Uterus (tissue), 4 donors: ENCODE measurements at regions of chr12 and their contacts with region 1.

Region 1: GRCh38 chr12:14257734-14258574 is 107.5 kb upstream of the ATF7IP start:
- DNase-seq: peak; percentile 94 to 96
- H3K4me3 ChIP-seq: no peak overlapping the region
- H3K27ac ChIP-seq: peak overlapping the region; percentile 85 to 92
- H3K4me1 ChIP-seq: peaks cover 0 to 8% of the 10 kb centered on the region in 2 donors
- H3K27me3 ChIP-seq: no peaks in the 10 kb centered on the region
- CTCF ChIP-seq: peak in 2 of 4 experiments; percentile 7 to 46
- POLR2A ChIP-seq: peak in 1 of 2 donors; percentile 57

Region 2: DNA sequence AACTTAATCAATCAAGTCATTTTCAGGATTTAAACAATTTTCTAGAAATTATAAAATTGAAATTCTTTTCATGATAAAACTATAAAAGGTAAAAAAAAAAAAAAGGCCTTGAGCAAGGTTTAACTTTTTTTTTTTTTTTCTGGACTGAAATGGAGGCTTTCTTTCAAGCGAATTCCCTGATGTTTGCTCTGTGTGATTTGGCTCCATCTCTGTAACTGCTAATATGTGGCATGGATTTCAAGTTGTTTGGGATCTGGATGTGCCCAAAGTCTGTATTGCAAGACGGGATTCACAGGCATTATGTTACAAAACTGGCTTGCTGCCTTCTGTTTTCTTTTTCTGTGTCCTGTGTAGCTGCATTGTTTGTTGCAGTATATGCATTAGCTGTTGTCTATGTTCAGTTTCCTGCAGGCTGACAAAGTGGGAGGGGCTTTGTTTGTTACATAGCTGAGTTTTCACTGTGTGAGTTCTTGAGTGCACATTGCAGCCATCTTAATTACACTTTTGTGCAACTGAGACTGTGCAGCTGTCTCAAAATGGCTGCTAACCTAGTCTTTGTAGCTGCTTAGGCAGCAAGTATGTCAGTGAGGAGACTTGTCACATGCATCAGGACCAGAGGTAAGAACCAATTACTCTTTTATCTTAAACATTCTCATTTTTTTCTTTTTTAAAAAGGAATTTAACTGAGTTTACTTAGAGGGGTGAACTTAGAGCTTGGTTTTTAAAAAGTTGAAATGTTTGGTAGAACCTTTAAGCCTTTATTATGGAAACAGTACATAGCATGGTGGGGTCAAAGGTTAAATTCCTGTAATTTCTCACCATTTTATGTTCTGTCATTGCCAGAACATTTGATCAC is 127.1 kb after region 1 on chr12:
- intact Hi-C with region 1: loop called (anchors 5 kb)
- DNase-seq: peak; percentile 30 to 57
- H3K4me3 ChIP-seq: peak overlapping the region; percentile 13 to 14
- H3K27ac ChIP-seq: peak overlapping the region; percentile 40 to 66
- H3K4me1 ChIP-seq: no peaks in the 10 kb centered on the region
- H3K27me3 ChIP-seq: no peaks in the 10 kb centered on the region
- CTCF ChIP-seq: no peak
- POLR2A ChIP-seq: no peak